GM12878 (cell line): ENCODE measurements at regions of chr15 and their contacts with region 1.

Region 1: DNA sequence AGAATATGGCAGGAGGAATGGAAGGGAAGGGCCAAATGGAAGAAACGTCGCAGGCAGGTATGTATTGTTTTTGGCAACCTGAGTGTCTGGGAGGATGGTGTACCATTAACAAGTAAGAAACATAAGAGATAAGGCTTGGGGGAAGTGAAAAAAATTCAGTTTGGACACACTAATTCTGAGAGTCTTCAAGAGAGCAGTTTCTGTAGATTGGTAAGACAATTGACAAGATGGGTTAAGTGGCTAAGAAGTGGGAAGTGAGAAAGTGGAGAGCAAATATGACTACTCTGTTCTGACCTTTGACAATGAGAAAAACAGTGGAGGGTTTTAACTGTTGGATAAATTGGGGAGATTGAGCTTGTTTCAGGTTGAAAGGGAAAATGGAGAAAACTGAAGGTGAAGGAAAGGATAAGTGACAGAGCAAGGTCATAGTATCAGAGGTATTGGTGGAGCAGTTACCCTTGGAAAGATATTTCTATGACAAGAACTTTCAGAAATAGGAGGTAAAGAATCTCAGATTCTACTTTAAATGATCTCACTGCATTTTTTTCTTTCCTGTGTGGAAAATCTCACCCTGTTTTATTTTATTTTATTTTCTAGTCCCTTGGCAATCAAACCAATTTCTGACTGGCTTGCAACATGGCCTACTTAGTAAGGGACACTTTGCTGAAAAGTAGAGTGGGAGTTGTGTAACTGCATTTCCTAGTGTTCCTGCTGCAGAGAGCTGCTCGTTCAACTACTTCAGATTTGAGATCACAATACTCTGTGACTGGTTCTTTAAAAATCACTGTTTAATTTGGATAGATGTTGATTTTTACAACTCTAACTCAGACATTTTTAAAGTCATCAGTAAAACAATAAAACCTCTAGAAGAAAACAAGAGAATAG is 23.1 kb upstream of the GABPB1 start:
- DNase-seq: peak; percentile 93
- ATAC-seq: peak; percentile 97
- H3K4me3 ChIP-seq: no peak overlapping the region
- H3K27ac ChIP-seq: peak overlapping the region; percentile 78
- H3K4me1 ChIP-seq: peaks cover 11% of the 10 kb centered on the region
- H3K27me3 ChIP-seq: no peaks in the 10 kb centered on the region
- CTCF ChIP-seq: no peak
- EP300 ChIP-seq: peak; percentile 94 to 100
- POLR2A ChIP-seq: no peak
- RAD21 ChIP-seq: no peak

Region 2: GRCh38 chr15:50166216-50166615 is 211.9 kb before region 1 on chr15:
- CTCF ChIA-PET with region 1: no interaction called
- POLR2A ChIA-PET with region 1: no interaction called
- RAD21 ChIA-PET with region 1: no interaction called
- SMC1A ChIA-PET with region 1: no interaction called
- in situ Hi-C with region 1: no loop called
- intact Hi-C with region 1: no loop called
- DNase-seq: no peak
- ATAC-seq: no peak
- H3K4me3 ChIP-seq: no peak overlapping the region
- H3K27ac ChIP-seq: no peak overlapping the region
- H3K4me1 ChIP-seq: no peaks in the 10 kb centered on the region
- H3K27me3 ChIP-seq: no peaks in the 10 kb centered on the region; a peak in 1 of 4 replicates
- CTCF ChIP-seq: no peak
- EP300 ChIP-seq: no peak
- POLR2A ChIP-seq: no peak
- RAD21 ChIP-seq: no peak

Region 3: GRCh38 chr15:50287324-50288116 is 90.6 kb before region 1 on chr15:
- CTCF ChIA-PET with region 1: no interaction called
- POLR2A ChIA-PET with region 1: no interaction called
- RAD21 ChIA-PET with region 1: no interaction called
- SMC1A ChIA-PET with region 1: no interaction called
- in situ Hi-C with region 1: no loop called
- intact Hi-C with region 1: no loop called
- DNase-seq: no peak
- ATAC-seq: no peak
- H3K4me3 ChIP-seq: no peak overlapping the region
- H3K27ac ChIP-seq: no peak overlapping the region
- H3K4me1 ChIP-seq: no peaks in the 10 kb centered on the region
- H3K27me3 ChIP-seq: no peaks in the 10 kb centered on the region
- CTCF ChIP-seq: no peak
- EP300 ChIP-seq: no peak
- POLR2A ChIP-seq: no peak
- RAD21 ChIP-seq: no peak

Region 4: DNA sequence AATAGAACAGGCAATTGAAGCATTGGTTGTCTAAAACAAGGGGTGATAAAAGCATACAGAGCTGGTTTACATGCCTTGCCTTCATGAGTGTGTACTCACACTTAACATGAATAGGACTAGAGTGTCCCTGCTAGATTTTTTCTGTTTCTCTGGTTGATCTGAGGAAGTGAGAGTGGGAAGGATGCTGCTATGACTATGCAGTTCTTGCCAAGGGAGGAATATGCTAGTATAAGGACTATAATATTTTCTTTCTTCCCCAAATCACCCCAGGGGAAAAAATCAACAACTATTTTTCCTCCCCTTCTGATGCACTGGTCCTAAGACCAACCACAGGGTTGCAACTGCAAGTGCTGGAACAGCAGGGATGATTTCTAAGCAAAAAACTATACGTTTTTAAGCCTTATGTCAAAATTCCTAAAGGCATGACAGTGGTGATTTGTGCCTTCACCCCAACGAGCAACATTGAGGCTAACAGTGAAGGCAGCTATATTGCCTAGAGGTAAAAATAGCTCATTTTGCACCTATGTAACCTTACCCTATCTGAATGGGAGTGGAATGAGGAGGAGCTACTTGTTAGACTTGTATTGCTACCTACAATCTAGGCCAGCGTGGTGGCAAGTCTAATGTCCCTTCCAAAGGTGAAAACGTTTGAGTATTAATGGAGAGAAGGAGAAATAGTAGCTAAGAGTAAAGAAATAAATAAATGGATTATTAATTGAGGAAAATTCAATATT is 12.6 kb after region 1 on chr15:
- CTCF ChIA-PET with region 1: interaction called, 5 read pairs
- POLR2A ChIA-PET with region 1: interaction called, 4 read pairs
- RAD21 ChIA-PET with region 1: interaction called, 9 read pairs
- SMC1A ChIA-PET with region 1: interaction called, 11 read pairs
- in situ Hi-C with region 1: no loop called
- intact Hi-C with region 1: no loop called
- DNase-seq: peak; percentile 49
- ATAC-seq: peak; percentile 91
- H3K4me3 ChIP-seq: peak overlapping the region; percentile 13; the same call in 1 of the 2 replicates
- H3K27ac ChIP-seq: peak overlapping the region; percentile 1; the same call in 1 of the 2 replicates
- H3K4me1 ChIP-seq: peaks cover 14% of the 10 kb centered on the region
- H3K27me3 ChIP-seq: no peaks in the 10 kb centered on the region
- CTCF ChIP-seq: no peak
- EP300 ChIP-seq: peak in 1 of 2 experiments; percentile 87; a peak in 2 of 4 replicates
- POLR2A ChIP-seq: no peak
- RAD21 ChIP-seq: no peak

Region 5: DNA sequence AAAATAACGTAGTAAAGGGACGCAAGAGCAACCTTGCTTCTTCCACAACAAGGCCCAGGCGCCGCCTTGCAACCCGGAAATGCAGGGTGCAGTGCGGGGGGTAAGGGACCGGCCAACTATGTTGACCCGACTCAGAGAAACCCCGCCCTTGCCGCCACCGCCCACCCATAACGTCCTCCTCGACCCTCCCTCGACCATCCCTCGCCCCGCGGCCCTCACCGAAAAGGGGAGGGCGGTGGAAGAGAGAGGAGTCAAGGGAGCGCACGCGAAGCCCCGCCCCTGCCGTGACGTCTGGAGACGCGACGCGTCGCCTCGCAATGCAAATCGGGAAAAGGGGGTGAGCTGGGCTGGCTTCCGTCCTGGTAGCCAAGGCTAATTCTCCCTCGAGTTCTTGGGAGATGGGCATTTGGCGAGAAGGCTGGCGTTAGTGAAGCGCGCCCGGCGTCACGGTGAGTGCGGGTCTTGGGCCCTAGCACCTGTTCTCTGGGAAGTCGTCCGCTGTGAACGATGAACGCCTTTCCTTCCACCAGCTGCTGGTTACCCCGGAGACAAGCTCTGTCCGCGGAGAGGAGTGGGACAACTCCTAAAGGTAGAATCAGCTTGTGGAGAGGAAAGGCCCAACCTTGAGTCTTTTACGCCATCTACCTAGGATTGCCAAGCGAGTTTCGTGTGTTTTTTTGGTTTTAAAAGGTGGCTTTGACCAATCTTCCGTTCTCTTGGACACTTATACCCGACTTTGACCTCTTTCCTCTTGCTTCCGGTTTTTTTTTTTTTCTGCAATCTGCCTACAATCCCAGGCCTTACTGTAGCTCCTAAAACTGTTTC is 46.2 kb after region 1 on chr15 and contains the start of gene USP8:
- CTCF ChIA-PET with region 1: no interaction called
- POLR2A ChIA-PET with region 1: interaction called, 9 read pairs
- RAD21 ChIA-PET with region 1: no interaction called
- SMC1A ChIA-PET with region 1: interaction called, 8 read pairs
- in situ Hi-C with region 1: no loop called
- intact Hi-C with region 1: loop called (anchors 5 kb)
- DNase-seq: peak; percentile 85
- ATAC-seq: peak; percentile 96
- H3K4me3 ChIP-seq: peak within 1 kb of the TSS; percentile 85
- H3K27ac ChIP-seq: peak within 1 kb of the TSS; percentile 86
- H3K4me1 ChIP-seq: peaks cover 5% of the 10 kb centered on the region
- H3K27me3 ChIP-seq: no peaks in the 10 kb centered on the region
- CTCF ChIP-seq: no peak
- EP300 ChIP-seq: no peak
- POLR2A ChIP-seq: peak; percentile 92
- RAD21 ChIP-seq: 0 out of 2 replicates have a peak, but pooled peaks have one; percentile 8
- polyA plus RNA-seq, gene USP8: 25.2 to 30.2 TPM